ENCODE measurements at regions of chr9 and their contacts with region 1.

Region 1: DNA sequence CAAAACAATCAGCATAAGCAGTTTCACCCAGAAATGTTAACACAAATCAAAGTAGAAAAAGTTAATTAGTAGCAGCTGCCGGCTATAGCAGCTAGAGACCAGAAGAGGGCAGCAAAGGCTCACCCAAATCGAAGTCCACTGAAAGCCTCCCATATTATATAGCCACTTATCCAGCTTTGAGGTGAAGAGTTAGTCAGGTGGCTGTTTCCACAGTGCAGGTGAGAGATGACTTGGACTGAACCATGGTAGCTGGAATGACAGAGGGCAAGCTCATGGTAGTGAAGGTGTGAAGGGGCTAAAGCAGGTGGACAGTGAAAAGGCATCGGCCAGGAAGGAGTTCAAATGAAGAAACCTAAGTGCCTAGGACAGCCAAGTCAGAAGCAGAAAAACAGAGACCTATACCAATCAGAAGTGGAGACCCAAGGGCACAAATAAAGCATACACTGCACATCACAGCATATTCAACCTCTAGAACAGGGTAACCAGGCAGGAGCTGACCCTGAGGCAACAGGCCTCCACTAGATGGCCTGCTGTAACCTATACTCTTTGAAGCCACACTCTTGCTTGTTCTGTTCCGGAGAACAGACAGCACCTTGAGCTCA is 7.2 kb upstream of the RNF38 start:
- DNase-seq: peak; percentile 73 to 87 (median 74)
- H3K4me3 ChIP-seq: no peak overlapping the region
- H3K27ac ChIP-seq: no peak overlapping the region
- H3K4me1 ChIP-seq: no peaks in the 10 kb centered on the region
- H3K27me3 ChIP-seq: no peaks in the 10 kb centered on the region

Region 2: DNA sequence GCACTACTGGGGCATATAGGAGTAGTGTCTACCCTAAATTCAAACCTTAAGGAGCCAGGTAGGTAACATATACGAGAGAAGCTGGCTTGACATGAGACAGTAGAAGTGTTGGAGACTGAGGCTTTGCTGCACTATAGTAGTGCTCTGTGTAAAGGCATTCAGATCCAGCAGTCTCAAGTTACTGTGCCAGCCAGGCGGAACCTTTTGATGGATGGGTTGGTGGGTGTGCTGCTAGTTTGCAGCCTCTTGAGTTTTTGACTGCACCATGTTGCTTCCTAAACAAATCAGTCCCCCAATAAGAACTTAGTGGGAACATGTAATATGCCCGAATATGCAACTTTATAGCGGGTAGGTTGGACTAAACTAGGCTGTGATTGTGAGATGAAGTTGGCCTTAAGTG is 215.0 kb before region 1 on chr9:
- CTCF ChIA-PET with region 1: no interaction called
- POLR2A ChIA-PET with region 1: no interaction called
- DNase-seq: no peak
- H3K4me3 ChIP-seq: peak overlapping the region in 6 of 7 experiments; percentile 86 to 99 (median 95)
- H3K27ac ChIP-seq: peak overlapping the region in 1 of 2 experiments; percentile 94
- H3K4me1 ChIP-seq: peaks cover 24 to 41% (median 30%) of the 10 kb centered on the region in 4 experiments
- H3K27me3 ChIP-seq: no peaks in the 10 kb centered on the region

Region 3: GRCh38 chr9:36423206-36423605 is 16.0 kb after region 1 on chr9:
- CTCF ChIA-PET with region 1: interaction called, 44 read pairs
- POLR2A ChIA-PET with region 1: no interaction called
- DNase-seq: no peak
- H3K4me3 ChIP-seq: no peak overlapping the region
- H3K27ac ChIP-seq: no peak overlapping the region
- H3K4me1 ChIP-seq: peaks cover 0 to 4% (median 2%) of the 10 kb centered on the region in 4 experiments
- H3K27me3 ChIP-seq: no peaks in the 10 kb centered on the region

Region 4: GRCh38 chr9:36457836-36458429 is 50.7 kb after region 1 on chr9:
- CTCF ChIA-PET with region 1: interaction called, 274 read pairs
- POLR2A ChIA-PET with region 1: no interaction called
- DNase-seq: no peak
- H3K4me3 ChIP-seq: peak overlapping the region in 4 of 7 experiments; percentile 3 to 56 (median 38)
- H3K27ac ChIP-seq: no peak overlapping the region
- H3K4me1 ChIP-seq: peaks cover 15 to 41% (median 24%) of the 10 kb centered on the region in 4 experiments
- H3K27me3 ChIP-seq: no peaks in the 10 kb centered on the region

Region 5: GRCh38 chr9:36560857-36561221 is 153.6 kb after region 1 on chr9:
- CTCF ChIA-PET with region 1: interaction called, 216 read pairs
- POLR2A ChIA-PET with region 1: interaction called, 6 read pairs
- DNase-seq: no peak
- H3K4me3 ChIP-seq: no peak overlapping the region
- H3K27ac ChIP-seq: no peak overlapping the region
- H3K4me1 ChIP-seq: no peaks in the 10 kb centered on the region
- H3K27me3 ChIP-seq: no peaks in the 10 kb centered on the region

Region 6: DNA sequence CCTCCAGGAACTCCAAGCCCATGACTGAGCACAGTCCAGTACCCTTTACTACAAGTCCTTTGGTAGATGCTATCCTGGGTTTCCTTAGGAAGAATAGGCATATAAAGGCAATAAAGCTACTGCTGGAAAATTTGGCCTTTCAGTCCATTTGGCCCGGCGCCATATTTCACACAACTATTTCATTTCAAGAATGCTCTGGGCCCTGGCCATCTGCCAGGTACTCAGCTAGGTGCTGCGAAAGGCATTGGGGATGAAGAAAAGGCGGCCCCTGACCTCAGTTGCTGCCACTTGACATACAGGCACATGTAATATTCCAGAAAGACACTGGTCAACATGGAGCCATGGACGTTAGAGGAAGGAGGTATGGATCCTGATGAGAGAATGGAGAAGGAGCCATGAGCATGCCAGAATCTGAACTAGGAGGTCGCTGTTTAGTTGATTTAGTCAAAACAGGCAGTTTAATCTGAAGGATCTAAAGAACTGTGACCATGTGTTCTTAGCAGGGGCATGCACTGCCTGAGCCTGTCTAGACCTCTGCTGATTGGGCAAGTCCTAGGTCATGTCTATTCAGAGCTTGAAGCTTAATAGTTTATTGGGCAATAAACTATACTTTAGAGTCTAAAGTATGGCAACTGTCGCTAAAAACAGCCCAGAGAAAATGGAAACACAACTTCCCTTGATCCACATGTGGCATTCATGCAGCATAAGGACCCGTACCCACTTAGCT is 314.8 kb after region 1 on chr9:
- CTCF ChIA-PET with region 1: no interaction called
- POLR2A ChIA-PET with region 1: no interaction called
- DNase-seq: no peak
- H3K4me3 ChIP-seq: no peak overlapping the region
- H3K27ac ChIP-seq: no peak overlapping the region
- H3K4me1 ChIP-seq: no peaks in the 10 kb centered on the region
- H3K27me3 ChIP-seq: peaks cover 0 to 4% (median 0%) of the 10 kb centered on the region in 5 experiments

Measured in common myeloid progenitor, CD34-positive (primary cell).